ENCODE measurements at regions of chr5 and their contacts with region 1.

Region 1: GRCh38 chr5:56358703-56359681 is 125.9 kb upstream of the ANKRD55 start:
- DNase-seq: no peak
- ATAC-seq: peak; percentile 72

Region 2: GRCh38 chr5:56298336-56299090 is 60.5 kb before region 1 on chr5:
- intact Hi-C with region 1: loop called (anchors 2 kb)
- DNase-seq: peak; percentile 64
- ATAC-seq: peak; percentile 76

Measured in Right ventricle myocardium inferior (tissue), 1 donor.